ENCODE measurements at regions of chr10 and their contacts with region 1.

Region 1: DNA sequence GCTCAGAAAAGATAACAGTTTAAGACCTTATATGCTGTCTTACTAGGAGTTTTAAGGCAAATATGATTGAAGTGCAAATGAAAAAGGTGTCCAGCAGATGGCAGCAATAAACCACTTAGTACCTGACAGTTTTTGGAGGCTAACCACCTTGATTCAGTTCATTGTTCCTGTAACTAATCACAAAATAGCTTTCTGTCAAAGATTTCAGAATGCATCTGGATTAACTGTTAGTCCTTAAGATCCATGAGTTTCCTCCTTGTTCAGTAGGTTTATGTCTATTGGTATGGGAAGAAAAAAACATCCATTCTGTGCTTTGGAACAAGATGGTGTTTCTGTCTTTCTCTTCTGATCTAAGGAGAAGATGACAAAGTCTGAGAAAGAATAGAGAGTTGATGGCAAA is 46.6 kb downstream of the CCSER2 start:
- DNase-seq: no peak
- ATAC-seq: peak in 2 of 4 donors; percentile 64 to 81
- H3K4me3 ChIP-seq: no peak overlapping the region
- H3K27ac ChIP-seq: no peak overlapping the region
- H3K4me1 ChIP-seq: no peaks in the 10 kb centered on the region
- H3K27me3 ChIP-seq: no peaks in the 10 kb centered on the region
- CTCF ChIP-seq: peak; percentile 80

Region 2: DNA sequence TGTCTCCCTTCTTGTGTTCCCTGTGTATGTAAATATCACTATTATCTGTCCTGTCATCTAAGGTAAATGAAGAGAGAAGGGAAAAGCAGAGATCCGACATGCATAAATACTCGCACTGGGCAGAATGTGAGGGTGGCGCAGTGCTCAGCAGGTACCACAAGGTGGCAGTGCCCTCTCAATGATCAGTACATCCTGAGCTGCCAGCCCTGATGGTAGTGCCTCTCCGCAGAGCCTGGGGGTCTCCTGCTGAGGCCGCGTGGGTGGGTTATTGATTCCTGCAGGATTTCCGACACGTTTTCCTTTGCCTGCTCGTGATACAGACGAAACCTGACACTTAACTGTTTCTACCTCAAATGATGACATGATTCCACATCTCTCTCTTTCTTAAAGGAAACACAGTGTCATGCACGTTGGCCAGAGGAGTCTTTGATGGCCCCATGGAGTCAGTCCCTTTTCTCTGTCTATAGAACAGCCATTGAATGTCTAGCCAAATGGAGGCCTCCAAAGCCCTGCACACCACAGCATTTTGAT is 110.3 kb before region 1 on chr10:
- intact Hi-C with region 1: loop called (anchors 5 to 10 kb)
- DNase-seq: peak; percentile 52 to 73
- ATAC-seq: peak; percentile 89 to 94 (median 92)
- H3K4me3 ChIP-seq: no peak overlapping the region
- H3K27ac ChIP-seq: no peak overlapping the region
- H3K4me1 ChIP-seq: no peaks in the 10 kb centered on the region
- H3K27me3 ChIP-seq: peaks cover 0 to 4% (median 3%) of the 10 kb centered on the region in 3 donors
- CTCF ChIP-seq: peak; percentile 96

Measured in psoas muscle (tissue), 8 donors.